OCI-LY7 (cell line): ENCODE measurements at regions of chr1 and their contacts with region 1.

Region 1: GRCh38 chr1:150561974-150562445 is 12.8 kb downstream of the ADAMTSL4 start:
- DNase-seq: peak; percentile 83
- H3K4me3 ChIP-seq: peak overlapping the region; percentile 74
- H3K27ac ChIP-seq: peak overlapping the region; percentile 99
- H3K4me1 ChIP-seq: peaks cover 72% of the 10 kb centered on the region
- CTCF ChIP-seq: no peak

Region 2: DNA sequence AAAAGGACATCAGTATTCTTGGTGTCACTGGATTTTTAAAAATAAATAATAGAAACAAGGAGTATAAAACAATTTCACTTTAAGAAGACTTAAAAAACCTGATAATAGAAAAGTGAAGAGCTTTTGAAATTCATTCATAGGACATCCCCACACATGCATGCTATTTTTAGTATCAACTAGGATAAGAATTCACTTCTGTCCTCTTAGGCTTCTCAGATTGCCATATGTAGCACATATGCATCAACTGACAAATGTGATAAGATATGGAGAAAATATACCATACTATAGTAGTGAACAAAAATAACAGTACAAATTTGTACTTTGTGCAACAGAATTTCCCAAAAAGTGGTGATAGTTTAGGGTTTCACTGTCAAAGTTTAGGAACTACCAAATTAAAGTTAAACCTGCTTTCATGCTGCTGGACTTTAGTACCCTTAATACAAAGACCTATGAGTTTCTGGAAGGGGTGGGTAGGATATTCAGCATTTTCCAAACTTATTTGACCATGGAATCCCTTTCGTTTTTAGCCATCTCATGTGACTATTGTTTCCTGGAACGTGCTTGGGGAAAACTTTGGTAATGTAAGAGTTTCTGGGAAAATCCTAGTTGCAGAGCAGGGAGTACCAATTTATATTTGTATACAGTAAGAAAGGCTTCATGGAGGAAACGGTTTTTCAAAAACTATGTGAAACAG is 178.2 kb before region 1 on chr1:
- CTCF ChIA-PET with region 1: no interaction called
- POLR2A ChIA-PET with region 1: no interaction called
- intact Hi-C with region 1: no loop called
- DNase-seq: no peak
- H3K4me3 ChIP-seq: no peak overlapping the region
- H3K27ac ChIP-seq: no peak overlapping the region
- H3K4me1 ChIP-seq: peaks cover 7% of the 10 kb centered on the region
- CTCF ChIP-seq: no peak

Region 3: DNA sequence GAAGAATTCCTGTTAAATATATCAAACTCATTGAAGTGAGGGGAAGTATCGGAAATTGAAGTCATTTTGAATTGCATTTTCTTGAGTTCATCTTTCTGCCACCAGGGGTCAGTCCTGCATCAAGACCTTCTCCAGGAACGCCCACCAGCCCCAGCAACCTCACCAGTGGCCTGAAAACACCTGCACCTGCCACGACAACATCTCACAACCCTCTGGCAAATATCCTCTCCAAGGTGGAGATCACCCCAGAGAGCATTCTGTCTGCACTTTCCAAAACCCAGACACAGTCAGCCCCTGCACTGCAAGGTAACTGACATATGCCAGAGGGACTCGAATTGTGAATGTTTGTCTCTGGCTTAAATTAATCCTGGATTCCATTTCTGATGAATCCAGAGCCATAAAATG is 97.6 kb before region 1 on chr1:
- CTCF ChIA-PET with region 1: no interaction called
- POLR2A ChIA-PET with region 1: no interaction called
- intact Hi-C with region 1: loop called (anchors 1 kb)
- DNase-seq: peak; percentile 80
- H3K4me3 ChIP-seq: no peak overlapping the region
- H3K27ac ChIP-seq: no peak overlapping the region
- H3K4me1 ChIP-seq: no peaks in the 10 kb centered on the region
- CTCF ChIP-seq: peak; percentile 84

Region 4: GRCh38 chr1:150613061-150613920 is 51.3 kb after region 1 on chr1:
- CTCF ChIA-PET with region 1: no interaction called
- POLR2A ChIA-PET with region 1: interaction called, 12 read pairs
- intact Hi-C with region 1: loop called (anchors 1 kb)
- DNase-seq: peak; percentile 53
- H3K4me3 ChIP-seq: no peak overlapping the region
- H3K27ac ChIP-seq: peak overlapping the region; percentile 85
- H3K4me1 ChIP-seq: peaks cover 65% of the 10 kb centered on the region
- CTCF ChIP-seq: no peak

Region 5: GRCh38 chr1:150765296-150765976 is 203.4 kb after region 1 on chr1 and contains the start of gene CTSS:
- CTCF ChIA-PET with region 1: no interaction called
- POLR2A ChIA-PET with region 1: no interaction called
- intact Hi-C with region 1: loop called (anchors 5 kb)
- DNase-seq: peak; percentile 88
- H3K4me3 ChIP-seq: peak within 1 kb of the TSS; percentile 87
- H3K27ac ChIP-seq: peak within 1 kb of the TSS; percentile 80
- H3K4me1 ChIP-seq: peaks cover 46% of the 10 kb centered on the region
- CTCF ChIP-seq: no peak
- total RNA-seq, gene CTSS: 38.7 and 47.4 TPM in 2 replicates

Region 6: DNA sequence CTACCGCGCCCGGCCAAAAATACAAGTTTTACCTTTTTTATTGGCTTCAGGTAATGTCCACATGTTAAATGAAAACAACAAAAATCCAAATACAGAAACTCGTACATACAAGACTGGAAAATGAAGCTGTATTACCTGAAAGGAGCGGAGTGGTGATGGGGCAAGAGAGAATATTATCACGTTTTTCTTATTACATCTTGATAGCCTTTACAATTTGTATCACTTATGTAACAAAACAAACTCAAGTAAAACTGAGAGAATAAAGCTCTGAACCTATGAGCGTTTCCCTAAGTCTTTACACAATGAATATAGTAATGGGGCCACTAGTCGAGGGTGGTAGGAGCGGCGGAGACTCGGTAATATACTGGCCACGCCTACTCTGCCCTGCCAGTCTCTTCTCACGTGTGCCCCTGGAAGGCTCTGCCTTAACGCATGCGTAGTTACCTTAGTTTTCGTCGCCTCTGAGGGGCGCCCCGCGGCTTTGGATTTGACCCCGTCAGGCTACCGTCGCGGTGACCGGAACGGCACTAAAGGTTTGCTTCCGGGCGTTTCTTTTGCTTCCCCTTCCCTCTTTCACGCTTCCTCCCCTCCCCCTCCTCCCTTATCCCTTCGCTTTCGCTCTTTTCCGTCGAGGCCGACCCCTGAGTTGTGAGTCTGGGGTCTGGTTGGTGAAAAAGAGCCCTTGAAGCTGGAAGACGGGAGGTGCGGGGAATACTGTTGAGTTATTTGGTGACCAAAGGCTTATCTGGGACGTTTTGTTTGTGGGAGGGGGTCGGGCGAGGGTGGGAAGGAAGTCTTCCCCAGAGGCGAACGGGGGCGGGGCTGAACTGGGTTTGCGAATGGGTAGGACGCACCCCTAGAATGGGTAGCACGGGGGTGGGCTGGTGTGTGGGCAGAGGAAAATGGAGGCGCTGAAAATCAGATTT is 364.1 kb after region 1 on chr1 and contains the start of gene SETDB1:
- CTCF ChIA-PET with region 1: interaction called, 5 read pairs
- POLR2A ChIA-PET with region 1: interaction called, 4 read pairs
- intact Hi-C with region 1: loop called (anchors 2 kb)
- DNase-seq: peak; percentile 99
- H3K4me3 ChIP-seq: peak within 1 kb of the TSS; percentile 75
- H3K27ac ChIP-seq: peak within 1 kb of the TSS; percentile 64
- H3K4me1 ChIP-seq: peaks cover 37% of the 10 kb centered on the region
- CTCF ChIP-seq: 0 out of 2 replicates have a peak, but pooled peaks have one; percentile 35
- total RNA-seq, gene SETDB1: 42.3 and 66.8 TPM in 2 replicates